Aorta (tissue), 5 donors: ENCODE measurements at regions of chr9 and their contacts with region 1.

Region 1: GRCh38 chr9:82457891-82458290 is 469.3 kb downstream of the SPATA31D1 start:
- DNase-seq: no peak
- ATAC-seq: no peak
- H3K4me3 ChIP-seq: no peak overlapping the region
- H3K27ac ChIP-seq: no peak overlapping the region
- H3K4me1 ChIP-seq: no peaks in the 10 kb centered on the region
- H3K27me3 ChIP-seq: no peaks in the 10 kb centered on the region

Region 2: DNA sequence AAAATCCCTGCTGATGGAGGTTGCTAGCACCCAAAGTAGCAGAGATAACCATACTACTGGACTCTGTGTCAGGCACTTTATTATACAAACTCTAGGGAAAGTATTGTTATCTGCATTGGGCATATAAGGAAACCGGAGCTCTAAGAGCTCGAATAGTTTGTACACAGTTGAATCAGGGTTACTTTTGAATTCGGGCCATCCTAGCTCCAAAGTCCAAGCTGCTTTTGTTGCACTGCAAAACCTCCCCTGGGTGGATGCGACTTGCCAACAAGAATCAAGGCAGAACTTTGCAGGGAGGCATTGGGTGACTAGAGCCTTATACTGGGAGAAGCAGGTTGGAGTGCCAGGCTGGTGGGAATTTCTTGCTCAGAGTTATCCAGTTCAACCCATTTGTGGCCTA is 34.2 kb before region 1 on chr9:
- intact Hi-C with region 1: loop called in 1 of 2 experiments (anchors 1 kb)
- DNase-seq: no peak
- ATAC-seq: no peak
- H3K4me3 ChIP-seq: no peak overlapping the region
- H3K27ac ChIP-seq: no peak overlapping the region
- H3K4me1 ChIP-seq: no peaks in the 10 kb centered on the region
- H3K27me3 ChIP-seq: no peaks in the 10 kb centered on the region